CD8-positive, alpha-beta T cell (primary cell): ENCODE measurements at regions of chr5 and their contacts with region 1.

Region 1: GRCh38 chr5:43105369-43106289 is 15.1 kb upstream of the ZNF131 start:
- DNase-seq: peak; percentile 81 to 96 (median 91)
- ATAC-seq: peak; percentile 94
- H3K4me3 ChIP-seq: peak overlapping the region; percentile 55 to 56
- H3K4me3 Mint-ChIP-seq: peak overlapping the region; percentile 84
- H3K27ac ChIP-seq: peak overlapping the region in 1 of 2 experiments; percentile 58
- H3K27ac Mint-ChIP-seq: peak overlapping the region; percentile 84
- H3K4me1 ChIP-seq: peaks cover 27% of the 10 kb centered on the region
- H3K4me1 Mint-ChIP-seq: peaks cover 35% of the 10 kb centered on the region
- H3K27me3 ChIP-seq: no peaks in the 10 kb centered on the region
- H3K27me3 Mint-ChIP-seq: no peaks in the 10 kb centered on the region
- CTCF ChIP-seq: peak; percentile 100

Region 2: GRCh38 chr5:42994246-42995151 is 111.1 kb before region 1 on chr5:
- CTCF ChIA-PET with region 1: interaction called, 3 read pairs
- POLR2A ChIA-PET with region 1: interaction called, 8 read pairs
- intact Hi-C with region 1: loop called (anchors 1 to 5 kb)
- DNase-seq: peak; percentile 75 to 94 (median 88)
- ATAC-seq: peak; percentile 63
- H3K4me3 ChIP-seq: peak overlapping the region; percentile 78 to 92
- H3K4me3 Mint-ChIP-seq: peak overlapping the region; percentile 99
- H3K27ac ChIP-seq: peak overlapping the region; percentile 97
- H3K27ac Mint-ChIP-seq: peak overlapping the region; percentile 100
- H3K4me1 ChIP-seq: peaks cover 23% of the 10 kb centered on the region
- H3K4me1 Mint-ChIP-seq: peaks cover 41% of the 10 kb centered on the region
- H3K27me3 ChIP-seq: no peaks in the 10 kb centered on the region
- H3K27me3 Mint-ChIP-seq: no peaks in the 10 kb centered on the region
- CTCF ChIP-seq: peak; percentile 93

Region 3: DNA sequence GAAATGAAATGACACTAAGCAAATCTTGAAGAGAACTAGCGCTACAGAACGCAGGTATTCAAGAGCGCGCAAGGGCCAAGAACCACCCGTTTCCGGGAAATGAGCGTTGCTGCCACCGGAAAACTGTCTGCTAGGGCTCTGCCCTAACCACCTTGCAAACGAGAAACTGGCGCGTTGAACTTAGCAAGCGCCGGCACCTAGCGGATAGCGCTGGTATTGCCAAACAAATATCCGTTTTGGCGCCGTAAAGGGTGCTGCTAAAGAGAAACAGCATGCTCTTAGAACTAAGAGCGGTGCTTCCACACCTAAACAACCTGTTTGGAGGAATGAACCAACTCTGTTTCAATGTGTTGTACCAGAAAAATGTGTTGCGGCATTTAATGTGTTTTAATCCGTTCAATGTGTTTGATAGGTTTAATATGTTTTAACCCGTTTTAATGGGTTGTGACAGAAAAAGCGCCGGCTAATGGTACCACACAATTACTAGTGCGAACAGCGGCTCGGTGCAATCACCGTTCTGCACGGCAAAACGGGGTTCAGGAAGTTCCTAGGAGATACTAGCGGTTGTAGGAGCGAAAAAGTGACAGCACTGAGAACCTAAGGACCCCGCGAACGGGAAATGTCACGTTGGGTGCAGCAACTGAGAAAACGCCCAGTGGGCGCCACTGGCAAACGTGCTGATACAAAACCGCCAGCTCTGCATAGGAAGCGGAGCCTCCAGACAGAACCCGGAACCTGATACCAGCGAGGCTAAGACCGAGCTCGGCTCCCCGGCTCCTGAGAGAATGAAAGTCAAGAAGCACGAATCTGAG is 65.1 kb before region 1 on chr5 and contains the start of gene ANXA2R:
- CTCF ChIA-PET with region 1: interaction called, 7 read pairs
- POLR2A ChIA-PET with region 1: interaction called, 5 read pairs
- intact Hi-C with region 1: loop called in 1 of 2 experiments (anchors 1 kb)
- DNase-seq: peak; percentile 88 to 98 (median 93)
- ATAC-seq: peak; percentile 58
- H3K4me3 ChIP-seq: peak within 1 kb of the TSS; percentile 86 to 87
- H3K4me3 Mint-ChIP-seq: peak within 1 kb of the TSS; percentile 93
- H3K27ac ChIP-seq: peak within 1 kb of the TSS; percentile 93 to 94
- H3K27ac Mint-ChIP-seq: peak within 1 kb of the TSS; percentile 98
- H3K4me1 ChIP-seq: peaks cover 27% of the 10 kb centered on the region
- H3K4me1 Mint-ChIP-seq: peaks cover 56% of the 10 kb centered on the region
- H3K27me3 ChIP-seq: no peaks in the 10 kb centered on the region
- H3K27me3 Mint-ChIP-seq: no peaks in the 10 kb centered on the region
- CTCF ChIP-seq: peak; percentile 79
- total RNA-seq, gene ANXA2R: 38.2 to 39.5 TPM

Region 4: GRCh38 chr5:43129161-43129560 is 23.5 kb after region 1 on chr5:
- CTCF ChIA-PET with region 1: interaction called, 149 read pairs
- POLR2A ChIA-PET with region 1: no interaction called
- intact Hi-C with region 1: no loop called
- DNase-seq: no peak
- ATAC-seq: no peak
- H3K4me3 ChIP-seq: no peak overlapping the region
- H3K4me3 Mint-ChIP-seq: no peak overlapping the region
- H3K27ac ChIP-seq: no peak overlapping the region
- H3K27ac Mint-ChIP-seq: peak overlapping the region; percentile 55
- H3K4me1 ChIP-seq: peaks cover 24% of the 10 kb centered on the region
- H3K4me1 Mint-ChIP-seq: peaks cover 67% of the 10 kb centered on the region
- H3K27me3 ChIP-seq: no peaks in the 10 kb centered on the region
- H3K27me3 Mint-ChIP-seq: no peaks in the 10 kb centered on the region
- CTCF ChIP-seq: no peak

Region 5: GRCh38 chr5:43389679-43390329 is 284.2 kb after region 1 on chr5:
- CTCF ChIA-PET with region 1: interaction called, 22 read pairs
- POLR2A ChIA-PET with region 1: no interaction called
- intact Hi-C with region 1: loop called (anchors 1 to 2 kb)
- DNase-seq: peak in 7 of 9 experiments; percentile 11 to 73 (median 43)
- ATAC-seq: peak; percentile 64
- H3K4me3 ChIP-seq: no peak overlapping the region
- H3K4me3 Mint-ChIP-seq: no peak overlapping the region
- H3K27ac ChIP-seq: no peak overlapping the region
- H3K27ac Mint-ChIP-seq: no peak overlapping the region
- H3K4me1 ChIP-seq: no peaks in the 10 kb centered on the region
- H3K4me1 Mint-ChIP-seq: peaks cover 35% of the 10 kb centered on the region
- H3K27me3 ChIP-seq: no peaks in the 10 kb centered on the region
- H3K27me3 Mint-ChIP-seq: no peaks in the 10 kb centered on the region
- CTCF ChIP-seq: peak; percentile 87